ENCODE measurements at regions of chr1 and their contacts with region 1.

Region 1: GRCh38 chr1:67149179-67149770 is 14.5 kb upstream of the C1orf141 start:
- DNase-seq: peak; percentile 74
- ATAC-seq: peak; percentile 96
- H3K4me3 ChIP-seq: no peak overlapping the region
- H3K27ac ChIP-seq: no peak overlapping the region
- H3K4me1 ChIP-seq: peaks cover 3 to 7% of the 10 kb centered on the region in 2 experiments; a peak in 3 of 4 replicates
- H3K27me3 ChIP-seq: no peaks in the 10 kb centered on the region
- CTCF ChIP-seq: peak; percentile 74 to 99 (median 80)
- POLR2A ChIP-seq: no peak
- RAD21 ChIP-seq: peak; percentile 95

Region 2: GRCh38 chr1:66764994-66765578 is 384.2 kb before region 1 on chr1:
- CTCF ChIA-PET with region 1: interaction called, 42 read pairs
- POLR2A ChIA-PET with region 1: no interaction called
- RAD21 ChIA-PET with region 1: interaction called in 1 of 2 experiments, 3 read pairs
- intact Hi-C with region 1: loop called (anchors 2 kb)
- DNase-seq: peak; percentile 31
- ATAC-seq: peak; percentile 82
- H3K4me3 ChIP-seq: no peak overlapping the region
- H3K27ac ChIP-seq: no peak overlapping the region
- H3K4me1 ChIP-seq: 0 out of 4 replicates have a peak, but pooled peaks cover 0 to 2% of the 10 kb centered on the region in 2 experiments
- H3K27me3 ChIP-seq: no peaks in the 10 kb centered on the region
- CTCF ChIP-seq: peak; percentile 62 to 86 (median 86)
- POLR2A ChIP-seq: no peak
- RAD21 ChIP-seq: peak; percentile 91

Region 3: GRCh38 chr1:66996018-66996682 is 153.1 kb before region 1 on chr1:
- CTCF ChIA-PET with region 1: interaction called, 62 read pairs
- POLR2A ChIA-PET with region 1: interaction called, 5 read pairs
- RAD21 ChIA-PET with region 1: interaction called, 6 to 10 read pairs
- intact Hi-C with region 1: loop called (anchors 1 kb)
- DNase-seq: peak; percentile 45
- ATAC-seq: peak; percentile 81
- H3K4me3 ChIP-seq: no peak overlapping the region
- H3K27ac ChIP-seq: no peak overlapping the region
- H3K4me1 ChIP-seq: no peaks in the 10 kb centered on the region
- H3K27me3 ChIP-seq: no peaks in the 10 kb centered on the region
- CTCF ChIP-seq: peak; percentile 82 to 96 (median 88)
- POLR2A ChIP-seq: no peak
- RAD21 ChIP-seq: peak; percentile 95

Region 4: GRCh38 chr1:67126111-67126746 is 23.0 kb before region 1 on chr1:
- CTCF ChIA-PET with region 1: interaction called, 18 read pairs
- POLR2A ChIA-PET with region 1: no interaction called
- RAD21 ChIA-PET with region 1: no interaction called
- intact Hi-C with region 1: no loop called
- DNase-seq: no peak
- ATAC-seq: peak; percentile 67
- H3K4me3 ChIP-seq: no peak overlapping the region
- H3K27ac ChIP-seq: no peak overlapping the region
- H3K4me1 ChIP-seq: no peaks in the 10 kb centered on the region
- H3K27me3 ChIP-seq: no peaks in the 10 kb centered on the region
- CTCF ChIP-seq: 0 out of 6 replicates have a peak, but pooled peaks of 1 of the 3 experiments have one; percentile 8
- POLR2A ChIP-seq: no peak
- RAD21 ChIP-seq: no peak

Region 5: DNA sequence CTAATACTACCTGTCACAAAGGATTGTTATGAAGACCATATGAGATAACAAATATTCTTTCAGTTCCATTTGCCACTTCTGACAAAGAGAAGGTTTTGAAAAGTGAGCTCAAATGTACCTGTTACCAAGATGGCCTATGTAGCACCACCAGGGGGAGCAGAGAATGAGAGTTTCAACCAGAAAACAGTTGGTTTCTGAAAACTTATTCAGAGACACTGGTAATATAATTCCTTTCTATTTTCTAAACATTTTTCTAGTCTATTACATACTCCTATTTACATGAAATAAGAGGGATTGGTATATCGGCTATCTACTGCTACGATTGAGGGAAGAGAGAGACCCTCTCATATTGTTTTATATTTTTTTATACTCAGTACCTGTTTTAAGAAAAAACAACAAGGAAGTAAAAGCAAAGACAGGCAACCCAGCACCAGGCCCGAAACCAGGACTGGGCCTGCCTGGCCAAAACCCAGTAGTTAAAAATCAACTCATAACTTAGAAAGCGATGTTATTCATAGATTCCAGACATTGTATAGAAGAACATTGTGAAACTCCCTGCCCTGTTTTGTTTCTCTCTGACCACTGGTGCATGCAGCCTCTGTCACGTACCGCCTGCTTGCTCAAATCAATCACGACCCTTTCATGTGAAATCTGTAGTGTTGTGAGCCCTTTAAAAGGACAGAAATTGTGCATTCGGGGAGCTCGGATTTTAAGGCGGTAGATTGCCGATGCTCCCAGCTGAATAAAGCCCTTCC is 65.3 kb after region 1 on chr1:
- CTCF ChIA-PET with region 1: interaction called, 30 read pairs
- POLR2A ChIA-PET with region 1: interaction called, 3 read pairs
- RAD21 ChIA-PET with region 1: no interaction called
- intact Hi-C with region 1: no loop called
- DNase-seq: peak; percentile 19
- ATAC-seq: peak; percentile 65
- H3K4me3 ChIP-seq: no peak overlapping the region
- H3K27ac ChIP-seq: no peak overlapping the region
- H3K4me1 ChIP-seq: no peaks in the 10 kb centered on the region
- H3K27me3 ChIP-seq: no peaks in the 10 kb centered on the region
- CTCF ChIP-seq: peak; percentile 53 to 74 (median 74); a peak in 5 of 6 replicates
- POLR2A ChIP-seq: no peak
- RAD21 ChIP-seq: peak; percentile 50

Measured in HCT116 (cell line).